ENCODE measurements at regions of chr16 and their contacts with region 1.

Region 1: GRCh38 chr16:21184834-21185233 is 26.4 kb downstream of the LDAF1 start:
- DNase-seq: no peak
- H3K4me3 ChIP-seq: no peak overlapping the region
- H3K27ac ChIP-seq: no peak overlapping the region
- H3K4me1 ChIP-seq: peaks cover 11% of the 10 kb centered on the region
- H3K27me3 ChIP-seq: no peaks in the 10 kb centered on the region
- CTCF ChIP-seq: no peak
- POLR2A ChIP-seq: no peak

Region 2: GRCh38 chr16:21199607-21200218 is 14.9 kb after region 1 on chr16:
- CTCF ChIA-PET with region 1: interaction called, 16 read pairs
- POLR2A ChIA-PET with region 1: no interaction called
- dilution Hi-C with region 1: no loop called
- intact Hi-C with region 1: no loop called
- DNase-seq: no peak
- H3K4me3 ChIP-seq: no peak overlapping the region
- H3K27ac ChIP-seq: no peak overlapping the region
- H3K4me1 ChIP-seq: no peaks in the 10 kb centered on the region
- H3K27me3 ChIP-seq: peaks cover 7% of the 10 kb centered on the region in 2 experiments
- CTCF ChIP-seq: no peak
- POLR2A ChIP-seq: no peak

Region 3: GRCh38 chr16:21277927-21278706 is 93.3 kb after region 1 on chr16 and contains the start of gene CRYM:
- CTCF ChIA-PET with region 1: interaction called, 12 read pairs
- POLR2A ChIA-PET with region 1: no interaction called
- dilution Hi-C with region 1: no loop called
- intact Hi-C with region 1: loop called (anchors 1 kb)
- DNase-seq: peak; percentile 36
- H3K4me3 ChIP-seq: peak within 1 kb of the TSS in 1 of 3 experiments; percentile 19
- H3K27ac ChIP-seq: no peak within 1 kb of the TSS
- H3K4me1 ChIP-seq: peaks cover 2% of the 10 kb centered on the region
- H3K27me3 ChIP-seq: peaks cover 25 to 36% of the 10 kb centered on the region in 2 experiments
- CTCF ChIP-seq: peak; percentile 57 to 86
- POLR2A ChIP-seq: no peak
- total RNA-seq, gene CRYM: not detected in 2 replicates

Region 4: DNA sequence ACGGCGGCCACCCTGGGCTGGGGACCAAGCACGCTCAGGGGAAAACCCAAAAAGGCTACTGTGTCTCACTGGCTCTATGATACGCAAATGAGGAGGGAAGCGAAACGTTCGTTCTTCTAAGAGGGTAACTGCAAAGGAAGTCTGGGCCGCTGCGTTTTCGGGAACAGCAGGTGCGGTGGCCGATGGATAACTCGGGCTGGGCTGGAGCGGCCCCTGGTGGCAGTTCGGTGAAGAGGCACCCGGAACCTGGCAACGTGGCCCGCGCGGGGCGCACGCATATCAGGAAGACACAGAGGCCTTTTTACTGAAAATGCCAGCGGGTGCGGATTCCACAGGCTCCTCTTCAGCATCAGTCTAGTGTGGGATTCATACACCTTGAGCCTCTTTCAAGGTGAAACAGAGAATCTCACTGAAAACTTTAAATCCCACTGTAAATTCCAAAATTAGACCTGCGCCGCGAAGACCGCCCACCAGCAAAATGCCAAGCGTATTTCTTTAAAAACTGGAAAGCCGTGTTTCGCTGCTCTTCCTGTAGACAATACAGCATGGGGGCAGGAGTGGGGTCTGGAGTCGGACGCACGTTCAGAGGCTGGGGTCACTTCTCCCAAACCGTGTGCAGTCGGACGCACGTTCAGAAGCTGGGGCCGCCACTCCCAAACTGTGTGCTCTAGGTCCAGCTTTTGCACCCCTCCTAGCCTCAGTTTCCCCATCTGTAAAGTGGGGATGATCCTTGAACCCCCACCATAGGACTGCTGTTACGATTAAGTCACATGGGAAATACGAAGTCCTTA is 370.2 kb after region 1 on chr16:
- CTCF ChIA-PET with region 1: interaction called, 20 read pairs
- POLR2A ChIA-PET with region 1: no interaction called
- dilution Hi-C with region 1: no loop called
- intact Hi-C with region 1: loop called (anchors 1 kb)
- DNase-seq: peak; percentile 66
- H3K4me3 ChIP-seq: no peak overlapping the region
- H3K27ac ChIP-seq: no peak overlapping the region
- H3K4me1 ChIP-seq: no peaks in the 10 kb centered on the region
- H3K27me3 ChIP-seq: peaks cover 0 to 3% of the 10 kb centered on the region in 2 experiments
- CTCF ChIP-seq: peak; percentile 96 to 100
- POLR2A ChIP-seq: no peak

Measured in endothelial cell of umbilical vein (primary cell).